Posterior vena cava (tissue), 2 donors: ENCODE measurements at regions of chr15 and their contacts with region 1.

Region 1: GRCh38 chr15:26702381-26702780 is 70.5 kb downstream of the GABRB3 start:
- DNase-seq: no peak

Region 2: DNA sequence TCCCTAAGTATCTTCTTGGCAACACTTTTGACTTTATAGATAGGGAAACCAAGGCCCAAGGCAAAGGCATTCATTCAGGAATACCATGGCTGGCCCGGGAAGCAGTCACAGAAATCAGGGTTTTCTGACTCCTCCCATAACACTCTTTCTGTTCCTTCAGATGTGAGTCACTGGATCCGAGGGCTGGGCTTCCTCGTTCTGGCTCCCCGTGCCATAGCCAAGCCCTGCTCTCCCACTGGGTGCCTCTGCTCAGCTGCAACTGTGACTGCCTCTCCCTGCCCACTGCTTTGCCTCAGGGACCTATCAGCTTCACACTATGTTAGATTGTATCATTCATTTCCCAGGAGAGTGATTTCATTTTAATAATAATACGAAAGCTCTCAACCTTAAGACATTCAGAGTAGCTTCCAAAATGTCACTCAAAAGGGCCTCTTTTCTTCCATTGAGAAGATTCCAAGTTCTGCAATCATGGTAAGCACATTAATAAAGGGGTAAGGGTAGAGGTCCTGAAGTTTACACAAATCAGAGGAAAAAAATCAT is 20.3 kb after region 1 on chr15:
- intact Hi-C with region 1: no loop called
- DNase-seq: no peak

Region 3: GRCh38 chr15:26736502-26737248 is 34.3 kb after region 1 on chr15:
- intact Hi-C with region 1: loop called in 1 of 2 experiments (anchors 1 kb)
- DNase-seq: no peak